Right cardiac atrium (tissue), 5 donors: ENCODE measurements at regions of chr14 and their contacts with region 1.

Region 1: DNA sequence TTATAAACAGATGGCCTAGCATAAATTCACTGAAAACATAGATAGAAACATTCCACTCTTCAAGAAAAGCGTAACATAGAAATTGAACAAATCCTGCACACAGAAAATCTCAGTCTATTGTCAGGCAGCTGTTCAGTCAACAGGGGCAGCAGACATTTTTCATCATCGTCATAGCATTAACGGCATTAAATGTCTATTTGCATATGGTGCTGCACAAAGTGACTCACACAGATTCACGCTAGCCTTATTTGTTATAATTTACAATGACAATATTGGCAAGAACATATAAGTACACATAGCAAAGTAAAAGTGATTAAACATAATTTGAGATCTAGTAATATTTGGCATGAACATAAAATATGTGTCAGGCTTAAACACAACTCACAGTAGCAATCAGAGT is 95.7 kb downstream of the CEP128 start:
- DNase-seq: no peak
- ATAC-seq: no peak
- H3K4me3 ChIP-seq: no peak overlapping the region
- H3K27ac ChIP-seq: no peak overlapping the region
- H3K4me1 ChIP-seq: no peaks in the 10 kb centered on the region
- H3K27me3 ChIP-seq: no peaks in the 10 kb centered on the region

Region 2: GRCh38 chr14:78959674-78960264 is 1886.1 kb before region 1 on chr14:
- intact Hi-C with region 1: loop called in 1 of 4 experiments (anchors 10 kb)
- DNase-seq: peak; percentile 69 to 88 (median 74)
- ATAC-seq: peak; percentile 75 to 78
- H3K4me3 ChIP-seq: peak overlapping the region; percentile 41
- H3K27ac ChIP-seq: no peak overlapping the region
- H3K4me1 ChIP-seq: no peaks in the 10 kb centered on the region
- H3K27me3 ChIP-seq: no peaks in the 10 kb centered on the region

Region 3: DNA sequence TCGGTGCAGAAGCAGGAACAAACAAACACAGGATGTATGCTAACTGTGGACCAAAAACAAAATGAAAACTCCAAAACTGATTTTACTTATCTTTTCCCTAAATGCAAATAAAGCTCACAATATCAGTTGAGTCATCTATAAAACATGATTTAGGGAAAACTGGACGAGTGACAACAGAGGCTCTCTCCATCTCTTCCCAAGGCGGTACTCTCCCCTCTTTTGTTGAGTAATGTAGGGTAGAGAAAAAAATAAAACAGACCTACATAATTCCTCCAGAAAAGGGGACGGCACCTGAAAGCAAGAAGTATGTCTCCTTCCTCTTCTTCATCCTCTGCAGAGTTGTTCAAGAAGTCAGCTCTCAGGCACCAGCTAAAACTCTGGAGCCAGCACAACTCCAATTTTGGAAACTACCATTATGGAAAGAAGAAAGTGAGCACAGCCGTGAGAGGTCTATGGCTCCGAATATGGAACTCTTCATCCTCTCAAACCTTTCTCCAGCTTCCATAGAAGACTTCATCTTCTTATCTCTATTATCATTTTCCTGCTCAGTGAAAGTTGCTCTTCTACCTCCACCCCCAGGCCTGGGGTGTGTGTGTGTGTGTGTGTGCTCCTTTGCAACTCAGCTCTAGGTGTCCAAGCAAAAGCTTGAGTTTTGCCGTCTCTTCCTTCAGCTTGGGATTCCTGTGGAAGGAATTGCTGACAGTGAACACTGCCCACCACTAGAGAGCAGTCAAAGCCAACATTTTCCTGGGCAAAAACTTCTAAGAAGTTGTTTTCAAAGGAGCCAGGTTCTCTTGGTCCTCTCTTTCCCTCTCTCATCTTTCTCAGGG is 790.0 kb before region 1 on chr14:
- intact Hi-C with region 1: loop called in 1 of 4 experiments (anchors 10 kb)
- DNase-seq: peak in 2 of 3 donors; percentile 11 to 19
- ATAC-seq: peak; percentile 21 to 52
- H3K4me3 ChIP-seq: no peak overlapping the region
- H3K27ac ChIP-seq: no peak overlapping the region
- H3K4me1 ChIP-seq: no peaks in the 10 kb centered on the region
- H3K27me3 ChIP-seq: no peaks in the 10 kb centered on the region

Region 4: GRCh38 chr14:81170104-81170828 is 324.4 kb after region 1 on chr14:
- intact Hi-C with region 1: no loop called
- DNase-seq: peak; percentile 95 to 97 (median 97)
- ATAC-seq: peak; percentile 100
- H3K4me3 ChIP-seq: peak overlapping the region; percentile 65
- H3K27ac ChIP-seq: peak overlapping the region; percentile 99
- H3K4me1 ChIP-seq: no peaks in the 10 kb centered on the region
- H3K27me3 ChIP-seq: no peaks in the 10 kb centered on the region

Region 5: DNA sequence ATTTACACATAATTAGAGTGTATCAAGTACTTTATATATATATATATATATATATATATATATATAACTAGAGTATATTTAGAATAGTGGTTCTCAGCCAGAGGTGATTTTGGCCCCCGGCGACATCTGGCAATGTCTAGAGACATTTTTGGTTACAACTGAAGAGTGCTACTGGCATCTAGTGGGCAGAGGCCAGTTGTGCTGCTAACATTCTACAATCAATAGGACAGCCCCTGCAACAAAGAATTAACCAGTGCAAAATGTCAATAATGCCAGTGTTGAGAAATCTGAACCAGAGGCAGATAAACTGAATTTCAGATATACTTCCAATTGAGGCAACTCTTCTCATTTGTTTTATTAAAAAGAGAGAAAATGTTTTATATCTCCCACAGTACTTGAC is 366.0 kb after region 1 on chr14:
- intact Hi-C with region 1: no loop called
- DNase-seq: peak; percentile 31 to 73 (median 61)
- ATAC-seq: peak; percentile 73 to 84
- H3K4me3 ChIP-seq: no peak overlapping the region
- H3K27ac ChIP-seq: no peak overlapping the region
- H3K4me1 ChIP-seq: no peaks in the 10 kb centered on the region
- H3K27me3 ChIP-seq: no peaks in the 10 kb centered on the region